CD4-positive, alpha-beta T cell (primary cell): ENCODE measurements at regions of chr2 and their contacts with region 1.

Region 1: DNA sequence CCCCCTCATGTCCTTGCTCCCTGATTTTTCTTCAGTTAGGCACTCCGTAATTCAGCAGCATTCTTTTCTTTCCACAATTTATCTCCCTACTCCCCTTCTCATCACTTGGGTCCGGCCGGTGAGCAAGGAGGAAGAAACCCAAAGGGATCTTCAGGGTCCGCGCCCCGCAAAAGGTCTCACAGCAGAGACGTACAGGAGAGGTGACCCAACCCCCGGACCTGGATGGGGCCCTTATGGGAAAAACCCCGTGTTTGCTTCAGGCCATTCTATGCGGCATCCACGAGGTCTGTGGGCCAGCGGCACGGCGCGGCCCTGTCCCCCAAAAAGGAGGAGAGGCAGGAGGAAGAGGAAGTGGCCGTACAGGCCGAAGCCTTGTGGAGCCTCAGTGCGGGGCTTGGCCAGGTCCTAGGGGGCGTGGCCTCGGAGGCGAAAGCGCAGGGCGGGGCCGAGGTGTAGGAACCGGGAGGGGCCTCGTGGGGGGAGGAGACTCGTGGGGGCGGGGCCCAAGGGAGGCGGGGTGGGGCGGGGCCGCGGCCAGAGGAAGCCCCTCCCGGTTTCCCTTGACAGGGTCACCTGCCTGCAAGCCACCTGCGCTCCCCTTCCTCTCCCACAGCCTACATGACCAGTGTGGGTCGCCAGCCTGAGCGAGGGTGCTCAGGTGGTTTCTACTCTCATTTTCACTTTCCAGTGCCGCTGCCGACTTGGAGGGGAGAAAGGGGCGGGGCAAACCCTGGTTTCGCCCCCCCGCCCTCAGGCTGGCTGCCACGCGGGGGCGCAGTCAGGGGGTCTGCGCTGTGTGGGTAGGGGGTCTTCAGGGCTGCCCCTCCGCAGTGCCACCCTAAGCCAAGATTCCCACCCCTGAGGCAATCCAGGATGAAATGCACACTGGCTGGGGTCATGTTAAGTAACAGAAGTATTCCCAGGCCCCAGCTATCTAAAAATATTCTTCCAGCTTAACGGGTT is 156.4 kb upstream of the XPO1 start:
- DNase-seq: peak; percentile 65 to 90 (median 80)
- ATAC-seq: peak; percentile 95
- H3K4me3 ChIP-seq: peak overlapping the region; percentile 83
- H3K4me3 Mint-ChIP-seq: peak overlapping the region; percentile 89
- H3K27ac ChIP-seq: peak overlapping the region; percentile 29 to 59
- H3K27ac Mint-ChIP-seq: peak overlapping the region; percentile 85
- H3K4me1 ChIP-seq: peaks cover 11% of the 10 kb centered on the region
- H3K4me1 Mint-ChIP-seq: peaks cover 9% of the 10 kb centered on the region
- H3K27me3 ChIP-seq: no peaks in the 10 kb centered on the region
- H3K27me3 Mint-ChIP-seq: no peaks in the 10 kb centered on the region
- CTCF ChIP-seq: peak; percentile 31

Region 2: GRCh38 chr2:61470965-61471904 is 223.4 kb before region 1 on chr2 and contains the start of gene USP34:
- CTCF ChIA-PET with region 1: no interaction called
- POLR2A ChIA-PET with region 1: no interaction called
- intact Hi-C with region 1: loop called in 1 of 2 experiments (anchors 5 kb)
- DNase-seq: peak; percentile 83 to 98 (median 90)
- ATAC-seq: peak; percentile 86
- H3K4me3 ChIP-seq: peak within 1 kb of the TSS; percentile 99
- H3K4me3 Mint-ChIP-seq: peak within 1 kb of the TSS; percentile 99
- H3K27ac ChIP-seq: peak within 1 kb of the TSS; percentile 95 to 100
- H3K27ac Mint-ChIP-seq: peak within 1 kb of the TSS; percentile 95
- H3K4me1 ChIP-seq: peaks cover 38% of the 10 kb centered on the region
- H3K4me1 Mint-ChIP-seq: peaks cover 36% of the 10 kb centered on the region
- H3K27me3 ChIP-seq: no peaks in the 10 kb centered on the region
- H3K27me3 Mint-ChIP-seq: no peaks in the 10 kb centered on the region
- CTCF ChIP-seq: no peak
- total RNA-seq, gene USP34: 137 to 138 TPM

Region 3: DNA sequence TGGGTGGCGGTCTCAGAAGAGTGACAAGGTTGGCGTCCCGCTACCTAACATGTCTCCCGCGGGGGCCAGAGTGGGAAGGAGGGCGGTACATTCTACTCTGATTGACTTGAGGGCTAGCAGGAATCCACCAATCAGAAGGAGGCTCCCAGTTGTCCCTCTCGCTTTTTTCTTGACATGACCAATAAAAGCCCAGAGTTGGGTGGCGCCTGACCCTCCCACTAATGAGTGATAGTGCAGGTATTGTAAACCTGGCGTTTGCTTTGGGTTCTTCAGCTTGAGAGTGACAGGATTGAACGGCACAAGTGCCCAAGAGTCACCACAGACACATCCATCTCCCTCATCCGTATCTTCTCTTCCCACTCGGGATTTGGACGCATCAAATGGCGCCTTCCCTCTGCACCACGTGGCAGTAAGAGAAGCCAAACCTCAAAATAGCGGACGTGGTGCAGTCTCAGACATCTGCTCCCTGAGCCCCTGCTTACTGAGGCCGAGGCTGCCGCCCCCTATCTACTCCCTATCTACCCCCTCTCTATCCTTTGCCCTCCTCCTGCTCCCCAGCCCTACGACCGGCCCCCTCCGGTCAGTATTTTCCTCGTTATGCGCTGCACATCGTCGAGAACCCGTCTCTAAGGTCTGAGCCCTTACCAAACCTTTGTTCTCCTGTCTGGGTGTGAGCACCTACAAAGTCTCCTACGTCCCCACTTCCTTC is 160.0 kb after region 1 on chr2:
- CTCF ChIA-PET with region 1: no interaction called
- POLR2A ChIA-PET with region 1: no interaction called
- intact Hi-C with region 1: loop called (anchors 1 to 5 kb)
- DNase-seq: peak; percentile 75 to 97 (median 83)
- ATAC-seq: peak; percentile 91
- H3K4me3 ChIP-seq: peak overlapping the region; percentile 98
- H3K4me3 Mint-ChIP-seq: peak overlapping the region; percentile 97
- H3K27ac ChIP-seq: peak overlapping the region; percentile 65 to 79
- H3K27ac Mint-ChIP-seq: peak overlapping the region; percentile 94
- H3K4me1 ChIP-seq: peaks cover 14% of the 10 kb centered on the region
- H3K4me1 Mint-ChIP-seq: peaks cover 16% of the 10 kb centered on the region
- H3K27me3 ChIP-seq: no peaks in the 10 kb centered on the region
- H3K27me3 Mint-ChIP-seq: no peaks in the 10 kb centered on the region
- CTCF ChIP-seq: no peak

Region 4: DNA sequence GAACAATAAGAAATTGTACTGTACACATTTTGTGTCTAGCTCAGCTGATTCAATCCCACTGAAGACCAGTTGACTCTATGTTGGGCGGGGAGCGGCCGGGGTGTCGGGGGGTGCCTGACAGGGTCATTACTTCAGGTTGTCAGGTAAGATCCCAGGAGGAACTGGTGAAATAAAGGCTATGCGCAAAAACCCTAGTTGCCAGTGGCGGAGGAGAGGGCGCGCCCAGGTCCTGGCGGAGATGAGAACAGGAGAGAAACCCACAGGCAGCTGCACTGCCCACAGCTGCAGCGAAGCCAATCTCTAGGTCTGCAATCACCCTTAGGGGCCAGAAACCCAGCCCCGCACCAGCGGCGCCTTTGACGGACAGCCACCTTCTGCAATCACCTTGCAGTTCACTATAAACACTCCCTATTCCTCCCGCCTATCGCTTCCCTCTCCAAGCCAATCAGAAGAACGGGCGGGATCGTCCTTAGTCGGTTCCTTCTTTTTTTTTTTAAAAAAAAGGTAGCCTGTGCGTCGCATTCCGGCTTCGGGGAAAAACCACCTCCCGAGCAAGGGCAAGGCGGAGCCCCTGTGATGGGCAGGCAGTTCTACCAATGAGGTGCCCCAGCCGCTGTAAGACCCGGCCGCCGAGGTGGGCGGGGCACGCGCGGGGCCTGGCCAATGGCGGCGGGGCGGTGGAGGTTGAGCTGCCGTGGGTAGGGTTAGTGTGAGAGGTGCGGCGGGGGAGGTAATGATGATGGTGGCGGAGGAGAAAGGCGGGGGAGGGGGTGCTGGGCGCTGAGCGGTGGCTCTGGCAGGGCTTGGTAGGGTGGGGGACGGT is 1010.6 kb after region 1 on chr2 and contains the start of gene EHBP1:
- CTCF ChIA-PET with region 1: no interaction called
- POLR2A ChIA-PET with region 1: no interaction called
- intact Hi-C with region 1: loop called in 1 of 2 experiments (anchors 10 kb)
- DNase-seq: peak; percentile 93 to 99 (median 97)
- ATAC-seq: peak; percentile 96
- H3K4me3 ChIP-seq: peak within 1 kb of the TSS; percentile 80
- H3K4me3 Mint-ChIP-seq: peak within 1 kb of the TSS; percentile 91
- H3K27ac ChIP-seq: peak within 1 kb of the TSS in 1 of 2 donors; percentile 24
- H3K27ac Mint-ChIP-seq: peak within 1 kb of the TSS; percentile 88
- H3K4me1 ChIP-seq: peaks cover 21% of the 10 kb centered on the region
- H3K4me1 Mint-ChIP-seq: peaks cover 36% of the 10 kb centered on the region
- H3K27me3 ChIP-seq: no peaks in the 10 kb centered on the region
- H3K27me3 Mint-ChIP-seq: no peaks in the 10 kb centered on the region
- CTCF ChIP-seq: no peak
- total RNA-seq, gene EHBP1: 21.4 to 22.3 TPM